CD4-positive, alpha-beta memory T cell (primary cell): ENCODE measurements at regions of chr4 and their contacts with region 1.

Region 1: GRCh38 chr4:137735561-137736104 is 203.3 kb upstream of the PCDH18 start:
- DNase-seq: no peak
- H3K4me3 ChIP-seq: no peak overlapping the region
- H3K4me3 Mint-ChIP-seq: no peak overlapping the region
- H3K27ac ChIP-seq: no peak overlapping the region
- H3K27ac Mint-ChIP-seq: no peak overlapping the region
- H3K4me1 ChIP-seq: no peaks in the 10 kb centered on the region
- H3K4me1 Mint-ChIP-seq: no peaks in the 10 kb centered on the region
- H3K27me3 ChIP-seq: no peaks in the 10 kb centered on the region
- H3K27me3 Mint-ChIP-seq: no peaks in the 10 kb centered on the region

Region 2: GRCh38 chr4:136194962-136195361 is 1540.7 kb before region 1 on chr4:
- CTCF ChIA-PET with region 1: no interaction called
- POLR2A ChIA-PET with region 1: no interaction called
- intact Hi-C with region 1: loop called (anchors 5 kb)
- DNase-seq: no peak
- H3K4me3 ChIP-seq: no peak overlapping the region
- H3K4me3 Mint-ChIP-seq: no peak overlapping the region
- H3K27ac ChIP-seq: no peak overlapping the region
- H3K27ac Mint-ChIP-seq: no peak overlapping the region
- H3K4me1 ChIP-seq: no peaks in the 10 kb centered on the region
- H3K4me1 Mint-ChIP-seq: no peaks in the 10 kb centered on the region
- H3K27me3 ChIP-seq: no peaks in the 10 kb centered on the region
- H3K27me3 Mint-ChIP-seq: no peaks in the 10 kb centered on the region